Pancreas (tissue), 10 donors: ENCODE measurements at regions of chr2 and their contacts with region 1.

Region 1: GRCh38 chr2:215454519-215455246 is 18.8 kb upstream of the FN1 start:
- DNase-seq: no peak
- ATAC-seq: peak in 3 of 4 donors; percentile 75 to 84 (median 76)
- H3K4me3 ChIP-seq: no peak overlapping the region
- H3K27ac ChIP-seq: no peak overlapping the region
- H3K4me1 ChIP-seq: no peaks in the 10 kb centered on the region
- H3K27me3 ChIP-seq: no peaks in the 10 kb centered on the region
- CTCF ChIP-seq: peak; percentile 24 to 72 (median 60)

Region 2: DNA sequence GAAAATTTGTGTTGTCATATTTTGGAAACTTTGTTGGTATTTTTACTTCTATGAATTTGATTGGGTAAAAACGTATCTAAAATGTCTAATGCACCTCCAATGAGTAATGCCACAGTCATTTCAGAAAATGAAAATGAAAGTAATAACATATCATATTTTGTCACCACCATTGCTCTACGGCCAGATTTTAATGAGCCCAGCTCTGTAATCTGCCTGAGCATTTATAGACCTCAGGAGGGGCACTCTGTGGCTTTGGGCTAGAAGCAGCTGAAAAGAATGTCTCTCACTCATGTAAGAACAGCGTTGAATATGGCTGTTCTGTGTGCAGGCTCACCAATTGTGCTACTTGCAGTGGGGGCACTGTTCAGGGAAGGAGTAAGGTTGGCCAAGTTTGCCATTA is 283.5 kb before region 1 on chr2:
- intact Hi-C with region 1: no loop called
- DNase-seq: no peak
- ATAC-seq: peak in 2 of 4 donors; percentile 21 to 29
- H3K4me3 ChIP-seq: no peak overlapping the region
- H3K27ac ChIP-seq: no peak overlapping the region
- H3K4me1 ChIP-seq: no peaks in the 10 kb centered on the region
- H3K27me3 ChIP-seq: no peaks in the 10 kb centered on the region
- CTCF ChIP-seq: no peak

Region 3: GRCh38 chr2:215931256-215931903 is 476.7 kb after region 1 on chr2:
- intact Hi-C with region 1: loop called in 1 of 3 experiments (anchors 5 kb)
- DNase-seq: peak in 3 of 6 donors; percentile 14 to 56 (median 24)
- ATAC-seq: peak; percentile 46 to 94 (median 91)
- H3K4me3 ChIP-seq: no peak overlapping the region
- H3K27ac ChIP-seq: no peak overlapping the region
- H3K4me1 ChIP-seq: no peaks in the 10 kb centered on the region
- H3K27me3 ChIP-seq: no peaks in the 10 kb centered on the region
- CTCF ChIP-seq: peak; percentile 66 to 92 (median 84)